BJ (cell line): ENCODE measurements at regions of chr11 and their contacts with region 1.

Region 1: DNA sequence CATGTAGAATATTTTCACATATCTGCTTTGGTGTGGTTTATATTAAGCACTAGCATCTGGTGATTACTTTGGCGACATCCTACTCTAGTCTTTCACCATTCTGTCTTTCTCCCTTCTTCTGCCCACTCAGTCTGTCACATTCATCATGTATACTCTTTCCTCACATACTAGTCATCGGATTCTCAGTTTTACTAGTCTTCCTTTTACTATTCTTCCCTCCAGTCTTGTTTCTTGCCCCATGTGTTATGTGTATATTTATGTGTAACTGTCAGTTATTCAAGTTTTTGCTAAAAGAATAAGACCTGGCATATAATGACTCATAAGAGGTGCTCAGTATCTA is 4.6 kb upstream of the DIXDC1 start:
- DNase-seq: no peak
- H3K4me3 ChIP-seq: no peak overlapping the region
- H3K27me3 ChIP-seq: no peaks in the 10 kb centered on the region
- CTCF ChIP-seq: no peak

Region 2: GRCh38 chr11:111878849-111879636 is 53.5 kb before region 1 on chr11 and contains the starts of genes CFAP68 and FDXACB1:
- CTCF ChIA-PET with region 1: interaction called, 11 read pairs
- POLR2A ChIA-PET with region 1: no interaction called
- DNase-seq: peak; percentile 81
- H3K4me3 ChIP-seq: peak within 1 kb of the TSS; percentile 62
- H3K27me3 ChIP-seq: no peaks in the 10 kb centered on the region
- CTCF ChIP-seq: peak; percentile 99
- polyA plus RNA-seq, gene CFAP68: 16.6 and 33.0 TPM in 2 replicates
- polyA plus RNA-seq, gene FDXACB1: 0.81 and 1.2 TPM in 2 replicates

Region 3: DNA sequence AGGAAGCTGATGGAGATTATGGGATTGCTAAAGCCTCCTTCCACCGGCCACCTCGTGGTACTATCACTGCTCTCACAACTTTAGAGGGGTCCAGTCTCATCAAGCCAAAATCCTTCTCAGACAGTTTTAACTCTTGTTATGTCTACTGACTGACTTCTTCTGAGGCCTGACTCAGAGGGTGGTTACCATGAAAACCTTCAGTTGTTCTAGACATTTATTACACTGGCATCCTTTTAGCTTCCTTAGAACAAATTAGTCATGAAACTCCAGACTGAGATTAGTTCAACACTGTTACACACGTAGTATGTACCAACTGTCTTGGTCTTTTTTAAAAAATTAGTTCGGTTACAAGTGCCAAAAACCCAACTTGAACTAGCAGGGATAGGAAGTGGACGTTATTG is 12.1 kb after region 1 on chr11:
- CTCF ChIA-PET with region 1: interaction called, 12 read pairs
- POLR2A ChIA-PET with region 1: no interaction called
- DNase-seq: peak; percentile 47
- H3K4me3 ChIP-seq: no peak overlapping the region
- H3K27me3 ChIP-seq: no peaks in the 10 kb centered on the region
- CTCF ChIP-seq: no peak

Region 4: GRCh38 chr11:111982019-111982464 is 49.5 kb after region 1 on chr11:
- CTCF ChIA-PET with region 1: interaction called, 65 read pairs
- POLR2A ChIA-PET with region 1: no interaction called
- DNase-seq: no peak
- H3K4me3 ChIP-seq: no peak overlapping the region
- H3K27me3 ChIP-seq: no peaks in the 10 kb centered on the region
- CTCF ChIP-seq: peak; percentile 64

Region 5: GRCh38 chr11:111990381-111990780 is 57.8 kb after region 1 on chr11:
- CTCF ChIA-PET with region 1: interaction called, 29 read pairs
- POLR2A ChIA-PET with region 1: no interaction called
- DNase-seq: no peak
- H3K4me3 ChIP-seq: no peak overlapping the region
- H3K27me3 ChIP-seq: no peaks in the 10 kb centered on the region
- CTCF ChIP-seq: no peak

Region 6: GRCh38 chr11:111996129-111996528 is 63.5 kb after region 1 on chr11:
- CTCF ChIA-PET with region 1: interaction called, 29 read pairs
- POLR2A ChIA-PET with region 1: no interaction called
- DNase-seq: no peak
- H3K4me3 ChIP-seq: no peak overlapping the region
- H3K27me3 ChIP-seq: no peaks in the 10 kb centered on the region
- CTCF ChIP-seq: no peak